ENCODE measurements at regions of chr17 and their contacts with region 1.

Region 1: GRCh38 chr17:49834118-49834743 is 13.6 kb downstream of the TAC4 start:
- DNase-seq: no peak
- ATAC-seq: no peak
- H3K4me3 ChIP-seq: no peak overlapping the region
- H3K4me3 Mint-ChIP-seq: no peak overlapping the region
- H3K27ac ChIP-seq: no peak overlapping the region
- H3K27ac Mint-ChIP-seq: no peak overlapping the region
- H3K4me1 ChIP-seq: no peaks in the 10 kb centered on the region
- H3K4me1 Mint-ChIP-seq: peaks cover 1% of the 10 kb centered on the region
- H3K27me3 ChIP-seq: no peaks in the 10 kb centered on the region
- H3K27me3 Mint-ChIP-seq: no peaks in the 10 kb centered on the region
- CTCF ChIP-seq: no peak

Region 2: DNA sequence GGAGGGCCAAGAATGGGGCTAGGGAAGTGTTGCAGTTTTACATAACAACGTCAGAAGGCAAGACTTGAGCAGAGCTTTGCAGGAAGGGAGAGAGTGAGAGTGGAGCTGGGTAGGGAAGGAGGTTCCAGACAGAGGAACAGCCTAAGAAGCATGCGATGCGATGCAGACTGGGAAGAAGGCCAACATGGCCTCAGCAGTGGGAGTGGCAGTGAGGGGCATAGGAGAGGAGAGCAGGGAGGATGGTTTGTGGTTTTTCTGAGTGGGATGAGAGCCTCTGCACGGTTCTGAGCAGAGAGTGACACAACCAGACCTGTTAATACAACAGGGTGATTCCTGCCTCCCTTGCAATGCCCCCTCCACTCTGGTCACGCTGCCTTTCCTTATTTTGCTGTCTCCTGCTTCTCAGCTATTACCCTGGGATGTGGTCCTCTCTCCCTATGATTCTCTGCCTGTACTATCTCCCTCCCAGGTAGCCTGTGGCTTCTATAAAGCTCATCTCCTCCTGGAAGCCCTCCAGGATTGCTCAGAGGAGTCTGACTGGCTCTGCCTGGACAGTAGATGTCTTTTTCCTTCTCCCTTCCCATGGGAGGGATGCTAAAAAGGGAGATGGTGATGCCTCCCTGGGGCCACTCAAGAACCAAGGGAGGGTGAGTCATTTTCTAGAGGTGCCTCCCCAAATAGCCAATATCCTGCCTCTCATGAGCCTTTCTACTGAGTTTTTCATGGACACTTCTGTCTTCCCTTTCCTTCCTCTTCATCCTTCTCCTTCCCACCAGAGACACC is 377.9 kb before region 1 on chr17:
- CTCF ChIA-PET with region 1: no interaction called
- POLR2A ChIA-PET with region 1: no interaction called
- intact Hi-C with region 1: no loop called
- DNase-seq: no peak
- ATAC-seq: no peak
- H3K4me3 ChIP-seq: no peak overlapping the region
- H3K4me3 Mint-ChIP-seq: no peak overlapping the region
- H3K27ac ChIP-seq: no peak overlapping the region
- H3K27ac Mint-ChIP-seq: no peak overlapping the region
- H3K4me1 ChIP-seq: peaks cover 6% of the 10 kb centered on the region
- H3K4me1 Mint-ChIP-seq: no peaks in the 10 kb centered on the region
- H3K27me3 ChIP-seq: peaks cover 20 to 24% of the 10 kb centered on the region in 2 experiments
- H3K27me3 Mint-ChIP-seq: peaks cover 54% of the 10 kb centered on the region
- CTCF ChIP-seq: no peak

Region 3: GRCh38 chr17:49821916-49822315 is 12.3 kb before region 1 on chr17:
- CTCF ChIA-PET with region 1: no interaction called
- POLR2A ChIA-PET with region 1: interaction called, 5 read pairs
- intact Hi-C with region 1: loop called in 1 of 2 experiments (anchors 2 kb)
- DNase-seq: no peak
- ATAC-seq: no peak
- H3K4me3 ChIP-seq: no peak overlapping the region
- H3K4me3 Mint-ChIP-seq: peak overlapping the region; percentile 7
- H3K27ac ChIP-seq: peak overlapping the region in 1 of 2 donors; percentile 18
- H3K27ac Mint-ChIP-seq: peak overlapping the region; percentile 96
- H3K4me1 ChIP-seq: peaks cover 47% of the 10 kb centered on the region
- H3K4me1 Mint-ChIP-seq: peaks cover 54% of the 10 kb centered on the region
- H3K27me3 ChIP-seq: no peaks in the 10 kb centered on the region
- H3K27me3 Mint-ChIP-seq: no peaks in the 10 kb centered on the region
- CTCF ChIP-seq: no peak

Region 4: GRCh38 chr17:49851387-49852291 is 17.4 kb after region 1 on chr17:
- CTCF ChIA-PET with region 1: no interaction called
- POLR2A ChIA-PET with region 1: no interaction called
- intact Hi-C with region 1: no loop called
- DNase-seq: peak; percentile 61 to 83 (median 69)
- ATAC-seq: peak; percentile 81
- H3K4me3 ChIP-seq: peak overlapping the region; percentile 82
- H3K4me3 Mint-ChIP-seq: peak overlapping the region; percentile 96
- H3K27ac ChIP-seq: peak overlapping the region; percentile 16 to 69
- H3K27ac Mint-ChIP-seq: peak overlapping the region; percentile 89
- H3K4me1 ChIP-seq: peaks cover 18% of the 10 kb centered on the region
- H3K4me1 Mint-ChIP-seq: peaks cover 22% of the 10 kb centered on the region
- H3K27me3 ChIP-seq: no peaks in the 10 kb centered on the region
- H3K27me3 Mint-ChIP-seq: no peaks in the 10 kb centered on the region
- CTCF ChIP-seq: peak; percentile 78